ENCODE measurements at regions of chr17 and their contacts with region 1.

Region 1: DNA sequence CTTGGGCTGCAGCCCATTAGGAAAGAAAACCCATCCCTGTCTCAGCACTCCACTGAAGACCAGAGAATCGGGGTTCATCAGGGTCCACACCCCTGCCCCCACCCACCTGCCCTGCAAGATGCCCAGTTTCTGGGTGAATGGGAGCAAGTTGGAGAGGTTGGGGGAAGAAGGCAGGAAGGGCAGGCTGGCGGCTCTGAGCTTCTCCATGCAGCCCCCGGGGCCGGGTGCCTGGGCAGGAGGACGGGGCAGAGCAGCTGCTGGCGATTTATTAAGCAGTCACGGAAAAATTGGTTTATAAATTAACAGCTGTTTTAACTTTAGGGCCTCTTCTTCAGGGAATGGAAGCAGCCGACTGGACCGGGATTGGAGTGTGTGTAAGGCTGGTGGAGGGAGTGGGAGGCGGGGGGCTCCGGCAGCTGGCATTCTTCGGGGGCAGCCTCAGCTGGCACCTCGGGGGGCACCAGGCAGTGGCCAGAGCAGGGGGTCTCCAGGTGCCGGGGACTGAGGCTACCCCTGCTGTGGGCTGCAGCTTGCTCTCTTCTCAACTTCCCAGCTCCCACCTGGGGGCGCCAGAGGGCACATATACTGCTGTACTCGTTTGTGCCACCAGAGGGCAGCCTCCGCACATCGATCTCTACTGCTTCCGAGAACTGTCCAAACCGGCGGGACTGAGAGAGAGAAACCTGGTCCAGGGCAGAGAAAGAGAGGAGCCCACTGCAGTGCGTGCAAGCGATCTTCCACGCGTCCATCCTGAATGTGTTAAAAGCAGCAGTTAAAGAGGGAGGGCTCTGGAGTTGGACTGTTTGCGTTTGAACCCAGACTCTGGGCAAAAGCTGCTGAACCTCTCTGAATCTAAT is 5.0 kb upstream of the PPP1R1B start:
- DNase-seq: peak; percentile 92
- H3K4me3 Mint-ChIP-seq: peak overlapping the region; percentile 68
- H3K27ac Mint-ChIP-seq: peak overlapping the region; percentile 67
- H3K4me1 Mint-ChIP-seq: peaks cover 27% of the 10 kb centered on the region
- H3K27me3 Mint-ChIP-seq: peaks cover 20% of the 10 kb centered on the region

Region 2: DNA sequence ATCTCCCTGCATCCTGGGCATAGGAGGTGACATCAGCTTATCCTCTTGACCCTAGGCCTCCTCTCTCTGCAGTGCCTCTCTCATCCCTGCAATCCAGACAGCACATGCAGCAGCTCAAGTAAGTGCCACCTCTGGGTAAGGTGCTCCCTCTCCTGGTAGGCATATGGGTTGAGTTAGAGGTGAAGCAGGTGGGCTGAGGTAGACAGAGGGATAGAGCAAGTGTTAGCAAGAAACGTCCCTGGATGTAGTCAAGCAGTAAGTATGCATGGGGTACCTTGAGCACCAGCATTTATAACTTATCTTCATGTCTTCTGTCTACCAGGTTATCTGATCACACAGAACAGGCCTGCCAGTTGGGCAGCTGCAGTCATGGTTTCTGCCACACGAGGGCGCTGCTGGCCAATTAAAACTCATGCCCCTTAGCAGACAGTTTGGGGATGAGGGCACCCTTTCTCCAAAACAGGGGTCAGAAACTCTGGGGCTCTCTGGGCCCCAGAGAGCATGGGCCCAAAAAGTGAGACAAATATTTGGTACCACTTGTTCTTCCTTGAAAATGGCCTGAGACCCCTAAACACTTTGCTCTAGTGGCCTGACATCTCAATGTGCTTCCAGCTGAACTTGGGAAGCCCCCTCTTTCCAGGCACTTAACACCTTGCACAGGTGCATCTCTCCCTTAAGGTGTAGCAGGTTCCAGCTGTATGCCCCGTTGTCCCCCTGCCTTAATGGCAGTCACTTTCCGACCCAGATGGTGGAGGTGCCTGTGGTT is 73.9 kb before region 1 on chr17:
- CTCF ChIA-PET with region 1: interaction called, 110 read pairs
- intact Hi-C with region 1: loop called (anchors 1 kb)
- DNase-seq: peak; percentile 87
- H3K4me3 Mint-ChIP-seq: no peak overlapping the region
- H3K27ac Mint-ChIP-seq: no peak overlapping the region
- H3K4me1 Mint-ChIP-seq: no peaks in the 10 kb centered on the region
- H3K27me3 Mint-ChIP-seq: no peaks in the 10 kb centered on the region

Region 3: GRCh38 chr17:39653662-39654331 is 32.0 kb after region 1 on chr17:
- CTCF ChIA-PET with region 1: interaction called, 44 read pairs
- intact Hi-C with region 1: loop called (anchors 1 kb)
- DNase-seq: peak; percentile 92
- H3K4me3 Mint-ChIP-seq: no peak overlapping the region
- H3K27ac Mint-ChIP-seq: no peak overlapping the region
- H3K4me1 Mint-ChIP-seq: peaks cover 47% of the 10 kb centered on the region
- H3K27me3 Mint-ChIP-seq: no peaks in the 10 kb centered on the region

Region 4: GRCh38 chr17:39687811-39688518 is 66.2 kb after region 1 on chr17 and contains the start of gene PGAP3:
- CTCF ChIA-PET with region 1: interaction called, 16 read pairs
- intact Hi-C with region 1: no loop called
- DNase-seq: peak; percentile 89
- H3K4me3 Mint-ChIP-seq: peak within 1 kb of the TSS; percentile 98
- H3K27ac Mint-ChIP-seq: peak within 1 kb of the TSS; percentile 94
- H3K4me1 Mint-ChIP-seq: peaks cover 15% of the 10 kb centered on the region
- H3K27me3 Mint-ChIP-seq: no peaks in the 10 kb centered on the region
- total RNA-seq, gene PGAP3: 11.8 to 11.9 TPM

Region 5: DNA sequence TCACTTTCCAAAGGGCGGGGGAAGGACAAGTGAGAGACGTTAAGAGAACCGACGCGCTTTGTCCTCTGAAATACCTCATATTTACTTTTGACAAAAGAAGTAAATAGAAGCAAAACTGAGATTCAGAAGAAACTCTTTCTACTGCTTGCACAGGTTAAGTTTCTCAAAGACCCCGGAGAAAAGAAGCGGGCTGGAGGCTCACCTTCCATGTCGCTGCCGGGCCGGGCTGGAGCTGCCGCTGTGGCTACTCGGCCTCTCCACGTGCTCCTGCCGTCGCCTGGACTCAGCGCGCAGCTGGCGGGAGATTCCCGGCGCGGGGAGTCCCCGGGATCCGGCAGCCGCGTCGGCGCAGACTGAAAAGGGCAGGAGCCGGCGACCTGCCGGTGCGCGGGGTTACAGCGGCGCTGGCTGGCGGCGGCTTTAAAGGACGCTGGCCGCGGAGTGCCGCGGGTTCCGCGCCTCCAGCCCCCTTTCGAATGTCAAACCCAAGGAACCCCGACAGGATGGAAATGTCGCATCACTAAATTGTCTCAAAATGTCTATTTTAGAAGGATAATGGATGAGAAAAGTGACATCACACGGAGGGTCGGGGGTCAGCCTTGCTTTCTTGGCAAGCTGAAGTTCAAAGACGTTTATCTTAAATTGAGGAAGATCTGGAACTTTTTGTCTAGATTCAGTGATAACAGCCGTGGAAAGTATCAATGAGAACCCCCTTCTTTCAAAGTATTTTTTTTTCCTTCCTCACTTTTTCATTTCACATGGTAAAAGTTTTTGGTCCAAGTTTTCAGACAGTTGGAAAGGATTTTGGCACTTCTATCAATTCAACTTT is 242.4 kb after region 1 on chr17 and contains the start of gene IKZF3:
- CTCF ChIA-PET with region 1: interaction called, 9 read pairs
- intact Hi-C with region 1: loop called (anchors 1 kb)
- DNase-seq: peak; percentile 94
- H3K4me3 Mint-ChIP-seq: peak within 1 kb of the TSS; percentile 92
- H3K27ac Mint-ChIP-seq: peak within 1 kb of the TSS; percentile 95
- H3K4me1 Mint-ChIP-seq: peaks cover 61% of the 10 kb centered on the region
- H3K27me3 Mint-ChIP-seq: no peaks in the 10 kb centered on the region
- total RNA-seq, gene IKZF3: 34.2 to 36.1 TPM

Region 6: GRCh38 chr17:39980351-39981206 is 358.8 kb after region 1 on chr17 and contains the start of gene PSMD3:
- CTCF ChIA-PET with region 1: interaction called, 25 read pairs
- intact Hi-C with region 1: loop called (anchors 1 kb)
- DNase-seq: peak; percentile 99
- H3K4me3 Mint-ChIP-seq: peak within 1 kb of the TSS; percentile 88
- H3K27ac Mint-ChIP-seq: peak within 1 kb of the TSS; percentile 80
- H3K4me1 Mint-ChIP-seq: peaks cover 39% of the 10 kb centered on the region
- H3K27me3 Mint-ChIP-seq: peaks cover 2% of the 10 kb centered on the region
- total RNA-seq, gene PSMD3: 122 to 125 TPM